ENCODE measurements at regions of chr6 and their contacts with region 1.

Region 1: DNA sequence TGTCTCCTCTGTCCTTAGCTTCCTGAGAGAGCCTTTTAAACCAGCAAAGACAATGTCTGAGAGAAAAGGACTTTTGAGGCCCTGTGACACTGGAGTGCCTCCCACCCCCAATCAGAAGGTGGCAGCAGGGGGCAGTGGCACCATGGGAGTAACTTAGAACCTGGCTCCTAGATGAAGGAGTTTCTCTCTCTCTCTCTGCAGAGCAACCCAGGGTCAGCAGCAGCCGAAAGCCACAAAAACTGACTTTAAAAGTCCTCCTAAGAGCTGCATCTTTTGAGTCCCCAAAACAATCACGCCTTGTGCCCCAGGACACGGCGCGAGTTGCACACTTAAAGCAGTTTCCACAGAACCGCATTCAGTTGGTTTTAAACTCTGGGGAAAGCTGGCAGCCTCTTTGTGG is 5.3 kb upstream of the TCP11 start:
- DNase-seq: peak in 1 of 2 donors; percentile 80
- H3K4me3 ChIP-seq: no peak overlapping the region
- H3K27ac ChIP-seq: no peak overlapping the region
- H3K4me1 ChIP-seq: peaks cover 4 to 18% of the 10 kb centered on the region in 2 donors
- H3K27me3 ChIP-seq: no peaks in the 10 kb centered on the region
- CTCF ChIP-seq: peak; percentile 74 to 88 (median 75)

Region 2: GRCh38 chr6:34806738-34807453 is 339.6 kb before region 1 on chr6:
- intact Hi-C with region 1: no loop called
- DNase-seq: no peak
- H3K4me3 ChIP-seq: no peak overlapping the region
- H3K27ac ChIP-seq: no peak overlapping the region
- H3K4me1 ChIP-seq: no peaks in the 10 kb centered on the region
- H3K27me3 ChIP-seq: no peaks in the 10 kb centered on the region
- CTCF ChIP-seq: no peak

Region 3: DNA sequence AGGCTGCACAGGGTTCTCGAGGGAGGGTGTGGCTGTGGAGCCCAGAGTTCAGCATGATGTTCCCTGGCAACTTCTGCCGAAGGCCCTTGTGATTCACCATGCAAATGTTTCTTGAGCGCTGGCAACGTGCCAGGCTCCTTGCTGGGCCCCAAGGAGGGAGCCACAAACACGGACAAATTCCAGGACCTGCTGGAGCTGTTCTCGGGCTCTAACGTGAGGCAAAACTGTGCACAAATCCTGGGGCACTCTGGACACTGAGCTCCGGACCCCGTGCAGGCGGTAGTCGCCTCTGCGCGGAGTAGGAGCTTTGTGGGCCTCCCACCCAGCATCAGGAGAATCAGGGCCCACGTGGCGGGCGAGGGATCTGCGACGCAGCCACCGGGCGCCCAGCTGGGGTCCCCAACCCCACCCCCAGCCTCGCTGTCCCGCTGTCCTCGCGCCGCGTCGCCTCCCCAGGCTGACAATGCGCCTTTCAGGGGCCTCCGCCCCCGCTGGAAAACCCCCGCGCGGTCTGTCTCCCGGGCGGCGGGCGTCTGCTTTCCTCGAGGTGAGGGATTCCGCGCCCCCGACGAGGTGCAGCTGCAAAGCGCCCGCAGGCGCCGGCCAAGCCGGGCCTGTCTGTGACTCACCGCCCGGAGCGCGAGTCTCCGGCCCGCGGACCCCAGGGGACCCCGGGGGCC is 35.6 kb after region 1 on chr6:
- intact Hi-C with region 1: loop called (anchors 2 kb)
- DNase-seq: peak; percentile 28 to 88
- H3K4me3 ChIP-seq: peak overlapping the region; percentile 27 to 52
- H3K27ac ChIP-seq: peak overlapping the region; percentile 91 to 94
- H3K4me1 ChIP-seq: peaks cover 12 to 63% of the 10 kb centered on the region in 2 donors
- H3K27me3 ChIP-seq: no peaks in the 10 kb centered on the region
- CTCF ChIP-seq: no peak

Region 4: DNA sequence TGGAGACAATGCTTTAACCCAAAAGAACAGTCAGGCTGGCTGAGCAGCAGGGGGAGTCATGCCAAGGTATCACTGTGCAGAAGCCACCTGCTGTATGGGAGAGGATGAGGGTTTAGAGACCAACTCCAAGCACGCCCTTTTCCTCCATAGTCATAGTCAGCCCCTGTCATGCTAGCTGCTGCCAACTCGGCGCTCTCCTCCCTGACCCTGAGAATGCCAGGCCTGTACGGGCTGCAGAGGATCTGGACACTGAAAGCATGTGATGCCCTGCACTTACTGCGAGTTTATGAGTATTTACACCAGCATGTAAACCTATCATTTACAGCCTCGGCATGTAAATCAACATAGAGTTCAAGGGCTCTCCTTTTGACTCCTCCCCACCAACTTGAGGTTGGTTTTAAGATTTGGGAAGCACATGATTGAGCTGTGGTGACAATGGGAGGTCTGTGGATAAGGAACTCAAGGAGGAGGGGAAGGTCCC is 55.7 kb after region 1 on chr6:
- intact Hi-C with region 1: loop called (anchors 1 kb)
- DNase-seq: no peak
- H3K4me3 ChIP-seq: no peak overlapping the region
- H3K27ac ChIP-seq: no peak overlapping the region
- H3K4me1 ChIP-seq: no peaks in the 10 kb centered on the region
- H3K27me3 ChIP-seq: no peaks in the 10 kb centered on the region
- CTCF ChIP-seq: no peak

Region 5: DNA sequence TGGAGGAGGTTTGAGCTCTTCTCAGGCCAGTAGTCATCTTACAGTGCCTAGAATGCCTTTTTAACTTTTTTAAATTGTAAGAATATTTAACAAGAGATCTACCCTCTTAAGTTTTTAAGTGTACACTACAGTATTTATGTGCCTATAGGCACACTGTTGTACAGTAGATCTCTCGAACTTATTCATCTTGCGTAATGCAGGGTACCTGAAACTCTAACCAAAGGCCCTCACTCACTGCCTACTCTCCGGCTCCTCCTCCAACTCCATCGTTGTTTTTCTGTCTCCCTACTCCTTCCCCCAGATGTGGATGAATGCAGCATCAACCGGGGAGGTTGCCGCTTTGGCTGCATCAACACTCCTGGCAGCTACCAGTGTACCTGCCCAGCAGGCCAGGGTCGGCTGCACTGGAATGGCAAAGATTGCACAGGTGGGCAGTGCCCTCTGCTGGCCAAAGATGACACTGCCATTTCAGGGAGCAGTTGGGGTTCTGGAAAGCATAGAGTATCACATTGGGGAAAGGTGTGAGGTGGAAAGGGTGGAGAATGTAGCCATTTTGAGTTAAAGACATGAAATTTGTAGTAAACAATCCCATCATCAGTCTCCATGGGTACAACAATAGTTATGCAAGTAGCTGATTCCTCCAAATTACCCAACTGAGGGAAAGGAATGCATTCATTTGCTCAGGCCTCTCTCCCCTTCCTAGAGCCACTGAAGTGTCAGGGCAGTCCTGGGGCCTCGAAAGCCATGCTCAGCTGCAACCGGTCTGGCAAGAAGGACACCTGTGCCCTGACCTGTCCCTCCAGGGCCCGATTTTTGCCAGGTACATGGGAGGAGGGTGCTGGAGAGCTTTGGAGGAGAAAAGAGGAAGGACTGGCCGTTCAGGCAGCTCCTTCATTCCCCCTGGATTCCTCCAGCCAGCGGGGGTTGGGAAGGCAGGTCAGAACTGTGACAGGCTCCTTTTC is 94.7 kb after region 1 on chr6:
- intact Hi-C with region 1: loop called (anchors 1 kb)
- DNase-seq: peak in 1 of 2 donors; percentile 86
- H3K4me3 ChIP-seq: no peak overlapping the region
- H3K27ac ChIP-seq: peak overlapping the region; percentile 78 to 89
- H3K4me1 ChIP-seq: peaks cover 8 to 24% of the 10 kb centered on the region in 2 donors
- H3K27me3 ChIP-seq: no peaks in the 10 kb centered on the region
- CTCF ChIP-seq: peak; percentile 91 to 96 (median 93)

Region 6: DNA sequence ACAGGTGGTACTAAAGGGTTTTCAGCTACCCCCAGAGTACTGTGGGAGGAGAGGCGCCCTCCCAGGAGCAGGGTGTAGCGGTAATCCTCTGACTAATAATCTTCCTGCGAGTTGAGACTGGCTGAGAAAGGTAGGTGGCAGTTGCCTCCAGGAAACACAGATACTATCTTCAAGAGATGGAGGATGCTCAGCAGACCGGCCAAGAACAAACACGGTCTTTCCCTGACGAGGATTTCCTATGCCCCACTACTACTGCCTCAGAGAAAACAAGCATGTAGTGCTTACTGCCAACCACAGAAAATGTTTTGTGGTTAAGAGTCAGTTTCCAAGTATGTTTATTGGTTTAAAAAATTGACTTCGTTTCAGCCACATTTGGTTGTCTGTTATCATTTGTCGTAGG is 1766.1 kb after region 1 on chr6:
- intact Hi-C with region 1: no loop called
- DNase-seq: no peak
- H3K4me3 ChIP-seq: no peak overlapping the region
- H3K27ac ChIP-seq: no peak overlapping the region
- H3K4me1 ChIP-seq: peaks cover 3 to 19% of the 10 kb centered on the region in 2 donors
- H3K27me3 ChIP-seq: no peaks in the 10 kb centered on the region
- CTCF ChIP-seq: no peak

Measured in ascending aorta (tissue), 2 donors.